ENCODE measurements at regions of chr22 and their contacts with region 1.

Region 1: GRCh38 chr22:40757071-40757470 is 62.1 kb downstream of the SLC25A17 start:
- DNase-seq: no peak

Region 2: GRCh38 chr22:40679964-40680818 is 76.9 kb before region 1 on chr22:
- intact Hi-C with region 1: loop called (anchors 5 kb)
- DNase-seq: no peak

Region 3: DNA sequence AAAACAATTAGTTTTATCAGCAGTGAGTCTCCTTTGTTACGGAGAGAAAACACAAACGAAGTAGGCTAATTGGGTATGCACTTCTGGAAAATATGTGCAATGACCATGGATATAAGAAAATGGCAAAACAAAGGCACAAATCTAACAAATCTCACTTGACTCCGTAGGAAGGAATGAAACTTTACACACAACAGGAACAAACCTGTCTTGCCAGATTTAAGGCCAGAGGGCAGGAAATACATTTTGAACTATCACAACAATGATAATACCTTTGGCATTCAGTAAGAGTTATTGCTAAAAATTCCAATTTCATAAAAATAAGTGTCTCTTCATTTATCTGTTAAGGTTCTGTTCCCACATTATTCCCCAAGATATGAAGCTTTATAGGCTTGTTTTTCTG is 25.4 kb after region 1 on chr22:
- intact Hi-C with region 1: no loop called
- DNase-seq: no peak

Measured in posterior vena cava (tissue), 2 donors.